ENCODE measurements at regions of chr19 and their contacts with region 1.

Region 1: DNA sequence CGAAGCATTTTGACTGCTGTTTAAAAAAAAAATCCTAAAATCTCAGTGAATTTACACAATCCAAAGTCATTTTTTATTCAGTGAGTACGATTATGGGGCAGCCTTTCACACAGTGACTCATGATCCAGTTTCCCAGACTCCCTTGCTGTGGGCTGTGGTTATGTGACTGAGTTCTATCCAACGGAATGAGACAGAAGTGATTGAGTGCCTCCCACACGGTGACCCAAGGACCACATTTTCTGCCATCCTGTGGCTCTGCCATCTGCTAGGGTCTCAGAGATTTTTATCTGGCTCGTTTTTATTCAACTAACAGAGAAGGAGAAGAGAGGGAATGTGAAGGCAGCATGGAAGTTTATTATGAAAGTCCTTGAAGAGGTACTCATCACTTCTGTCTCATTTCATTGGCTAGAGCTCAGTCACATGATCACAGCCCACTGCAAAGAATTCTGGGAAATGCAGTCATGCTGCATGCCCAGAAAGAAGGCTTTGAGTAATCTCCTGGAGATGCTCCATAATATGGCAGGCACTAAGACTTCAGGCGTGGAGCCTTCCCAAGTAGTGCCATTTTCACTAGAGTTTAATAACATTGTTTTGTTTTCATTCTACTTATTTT is 999.4 kb downstream of the UQCRFS1 start:
- DNase-seq: no peak
- H3K4me3 ChIP-seq: no peak overlapping the region
- H3K27ac ChIP-seq: no peak overlapping the region
- H3K4me1 ChIP-seq: peaks cover 0 to 4% (median 2%) of the 10 kb centered on the region in 4 experiments; a peak in 4 of 7 replicates
- H3K27me3 ChIP-seq: no peaks in the 10 kb centered on the region
- CTCF ChIP-seq: no peak
- EP300 ChIP-seq: no peak
- POLR2A ChIP-seq: no peak
- RAD21 ChIP-seq: no peak

Region 2: DNA sequence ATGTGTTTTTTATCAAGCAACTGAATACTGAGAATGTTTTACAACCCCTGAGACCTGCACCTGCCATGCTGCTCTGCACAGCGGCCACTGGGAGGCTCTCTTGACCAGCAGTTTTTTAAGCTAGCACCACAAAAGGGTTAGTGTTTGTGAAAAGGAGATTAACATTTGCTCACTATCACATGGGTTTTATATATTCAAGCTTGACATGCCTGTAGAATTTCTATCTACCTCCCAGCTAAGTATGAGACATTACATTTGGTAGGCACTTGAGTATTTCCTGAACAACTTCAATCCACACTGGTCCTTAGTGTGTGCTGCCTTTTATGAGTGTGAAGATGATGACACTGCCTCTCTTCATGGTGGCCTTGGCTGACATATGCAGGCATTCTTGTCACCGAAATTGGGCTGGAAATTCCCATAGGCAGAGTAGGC is 239.5 kb before region 1 on chr19:
- CTCF ChIA-PET with region 1: interaction called, 130 read pairs
- POLR2A ChIA-PET with region 1: no interaction called
- DNase-seq: peak in 1 of 2 experiments; percentile 52
- H3K4me3 ChIP-seq: no peak overlapping the region
- H3K27ac ChIP-seq: no peak overlapping the region
- H3K4me1 ChIP-seq: peaks cover 0 to 5% (median 2%) of the 10 kb centered on the region in 4 experiments; a peak in 2 of 7 replicates
- H3K27me3 ChIP-seq: no peaks in the 10 kb centered on the region; a peak in 1 of 7 replicates
- CTCF ChIP-seq: peak; percentile 80 to 86 (median 85)
- EP300 ChIP-seq: no peak
- POLR2A ChIP-seq: no peak
- RAD21 ChIP-seq: peak; percentile 97

Region 3: DNA sequence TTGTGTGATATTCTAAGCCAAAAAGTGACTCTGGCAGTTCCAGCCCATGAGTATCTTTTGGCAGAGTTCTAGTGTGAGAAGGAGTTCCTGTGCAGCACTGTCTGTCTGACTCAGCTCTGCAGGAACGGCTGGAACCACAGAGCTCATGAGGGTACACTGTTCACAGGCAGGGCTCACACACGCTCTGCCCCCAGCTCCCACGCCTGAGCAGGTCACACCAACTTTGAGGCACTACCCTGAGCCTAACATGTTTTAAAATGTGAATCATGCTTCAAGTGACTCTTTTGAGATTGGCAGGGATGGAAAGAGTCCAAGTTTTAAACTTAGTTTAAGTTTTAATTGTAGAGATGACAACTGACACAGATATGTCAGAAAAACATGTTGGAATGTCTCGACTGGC is 203.9 kb before region 1 on chr19:
- CTCF ChIA-PET with region 1: interaction called, 79 read pairs
- POLR2A ChIA-PET with region 1: no interaction called
- DNase-seq: no peak
- H3K4me3 ChIP-seq: no peak overlapping the region
- H3K27ac ChIP-seq: no peak overlapping the region
- H3K4me1 ChIP-seq: no peaks in the 10 kb centered on the region
- H3K27me3 ChIP-seq: no peaks in the 10 kb centered on the region
- CTCF ChIP-seq: no peak
- EP300 ChIP-seq: no peak
- POLR2A ChIP-seq: no peak
- RAD21 ChIP-seq: no peak

Region 4: GRCh38 chr19:28019899-28020298 is 193.7 kb before region 1 on chr19:
- CTCF ChIA-PET with region 1: interaction called, 79 read pairs
- POLR2A ChIA-PET with region 1: no interaction called
- DNase-seq: no peak
- H3K4me3 ChIP-seq: no peak overlapping the region
- H3K27ac ChIP-seq: no peak overlapping the region
- H3K4me1 ChIP-seq: peaks cover 0 to 6% (median 2%) of the 10 kb centered on the region in 4 experiments; a peak in 2 of 7 replicates
- H3K27me3 ChIP-seq: no peaks in the 10 kb centered on the region; a peak in 1 of 7 replicates
- CTCF ChIP-seq: no peak
- EP300 ChIP-seq: no peak
- POLR2A ChIP-seq: no peak
- RAD21 ChIP-seq: no peak

Region 5: DNA sequence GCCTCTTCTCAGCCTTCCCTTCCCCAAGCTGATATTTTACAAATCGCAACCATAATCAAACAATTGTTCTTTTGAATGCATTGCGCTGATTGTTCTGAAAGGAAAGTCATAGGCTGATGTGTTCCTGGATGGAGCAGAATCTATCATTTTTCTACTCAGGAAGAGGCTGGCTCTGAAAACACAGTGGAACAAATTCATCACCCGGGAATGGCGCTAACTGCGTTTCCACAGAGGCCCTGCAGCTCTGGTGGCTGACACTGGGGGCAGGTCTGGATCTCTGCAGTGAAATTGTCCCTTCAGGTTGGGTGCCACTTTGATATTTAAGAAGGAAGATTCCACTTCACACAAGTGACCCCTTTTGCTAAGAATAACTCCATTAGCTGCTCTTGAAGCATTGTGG is 61.4 kb before region 1 on chr19:
- CTCF ChIA-PET with region 1: interaction called, 18 read pairs
- POLR2A ChIA-PET with region 1: no interaction called
- DNase-seq: no peak
- H3K4me3 ChIP-seq: no peak overlapping the region
- H3K27ac ChIP-seq: no peak overlapping the region
- H3K4me1 ChIP-seq: peaks cover 0 to 5% (median 0%) of the 10 kb centered on the region in 4 experiments; a peak in 1 of 7 replicates
- H3K27me3 ChIP-seq: no peaks in the 10 kb centered on the region
- CTCF ChIP-seq: no peak
- EP300 ChIP-seq: no peak
- POLR2A ChIP-seq: no peak
- RAD21 ChIP-seq: no peak

Region 6: GRCh38 chr19:28169168-28169887 is 44.2 kb before region 1 on chr19:
- CTCF ChIA-PET with region 1: interaction called, 18 read pairs
- POLR2A ChIA-PET with region 1: no interaction called
- DNase-seq: peak in 1 of 2 experiments; percentile 51
- H3K4me3 ChIP-seq: peak overlapping the region in 1 of 4 experiments; percentile 22; a peak in 3 of 8 replicates
- H3K27ac ChIP-seq: no peak overlapping the region
- H3K4me1 ChIP-seq: peaks cover 7 to 22% (median 16%) of the 10 kb centered on the region in 4 experiments
- H3K27me3 ChIP-seq: no peaks in the 10 kb centered on the region
- CTCF ChIP-seq: no peak
- EP300 ChIP-seq: no peak
- POLR2A ChIP-seq: no peak
- RAD21 ChIP-seq: no peak

Region 7: DNA sequence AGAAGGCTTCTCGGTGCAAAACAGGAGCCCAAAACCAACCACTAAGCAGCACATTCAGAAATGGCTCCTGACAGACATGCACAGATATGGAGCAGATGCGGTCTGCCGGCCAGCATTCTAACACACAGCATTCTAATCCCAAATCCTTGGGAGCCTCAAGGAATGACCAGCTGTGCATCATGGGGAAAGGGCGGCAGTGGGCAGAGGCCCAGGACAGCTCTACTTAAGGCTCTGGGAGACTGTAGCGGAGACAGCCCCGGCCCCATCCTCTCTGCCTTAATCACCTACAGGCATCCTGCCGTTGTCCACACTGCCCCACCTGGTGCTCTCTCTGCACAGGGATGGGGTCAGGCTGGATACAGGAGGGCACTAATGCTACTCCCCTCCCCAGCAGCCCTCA is 16.6 kb before region 1 on chr19:
- CTCF ChIA-PET with region 1: no interaction called
- POLR2A ChIA-PET with region 1: no interaction called
- DNase-seq: no peak
- H3K4me3 ChIP-seq: no peak overlapping the region
- H3K27ac ChIP-seq: no peak overlapping the region
- H3K4me1 ChIP-seq: peaks cover 0 to 3% (median 0%) of the 10 kb centered on the region in 4 experiments; a peak in 2 of 7 replicates
- H3K27me3 ChIP-seq: no peaks in the 10 kb centered on the region; a peak in 1 of 7 replicates
- CTCF ChIP-seq: no peak
- EP300 ChIP-seq: no peak
- POLR2A ChIP-seq: no peak
- RAD21 ChIP-seq: no peak

Region 8: GRCh38 chr19:28234637-28235036 is 21.1 kb after region 1 on chr19:
- CTCF ChIA-PET with region 1: interaction called, 11 read pairs
- POLR2A ChIA-PET with region 1: interaction called, 8 read pairs
- DNase-seq: no peak
- H3K4me3 ChIP-seq: no peak overlapping the region
- H3K27ac ChIP-seq: no peak overlapping the region
- H3K4me1 ChIP-seq: no peaks in the 10 kb centered on the region; a peak in 2 of 7 replicates
- H3K27me3 ChIP-seq: no peaks in the 10 kb centered on the region
- CTCF ChIP-seq: no peak
- EP300 ChIP-seq: no peak
- POLR2A ChIP-seq: no peak
- RAD21 ChIP-seq: no peak